Activated naive CD4-positive, alpha-beta T cell treated with anti-CD3 and anti-CD28 coated beads for 36 hours (primary cell): ENCODE measurements at regions of chr1 and their contacts with region 1.

Region 1: GRCh38 chr1:246497331-246497915 is 9.7 kb downstream of the SMYD3 start:
- DNase-seq: no peak
- H3K4me3 Mint-ChIP-seq: no peak overlapping the region
- H3K27ac Mint-ChIP-seq: no peak overlapping the region
- H3K4me1 Mint-ChIP-seq: peaks cover 13% of the 10 kb centered on the region
- H3K27me3 Mint-ChIP-seq: no peaks in the 10 kb centered on the region

Region 2: DNA sequence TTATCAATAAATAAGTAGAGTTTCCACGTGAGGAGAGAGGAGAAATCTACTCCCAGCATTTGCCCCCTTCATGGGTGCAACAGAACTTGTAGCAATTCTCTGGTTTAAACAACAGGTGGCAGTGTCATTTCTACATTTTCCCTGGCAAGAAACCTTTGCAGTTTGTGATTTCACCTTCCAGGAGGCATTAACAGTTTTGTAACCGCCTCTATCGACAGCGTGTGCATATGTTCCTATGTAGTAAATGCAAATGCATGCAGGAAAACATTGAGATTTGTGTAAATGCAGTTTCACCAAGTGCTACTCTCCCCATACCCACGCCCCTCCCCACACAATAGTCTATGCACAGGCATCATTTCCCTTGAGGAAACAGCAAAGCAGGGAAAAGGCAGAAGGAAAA is 485.1 kb before region 1 on chr1:
- CTCF ChIA-PET with region 1: interaction called, 5 read pairs
- intact Hi-C with region 1: loop called (anchors 1 kb)
- DNase-seq: peak; percentile 11
- H3K4me3 Mint-ChIP-seq: no peak overlapping the region
- H3K27ac Mint-ChIP-seq: no peak overlapping the region
- H3K4me1 Mint-ChIP-seq: no peaks in the 10 kb centered on the region
- H3K27me3 Mint-ChIP-seq: no peaks in the 10 kb centered on the region

Region 3: DNA sequence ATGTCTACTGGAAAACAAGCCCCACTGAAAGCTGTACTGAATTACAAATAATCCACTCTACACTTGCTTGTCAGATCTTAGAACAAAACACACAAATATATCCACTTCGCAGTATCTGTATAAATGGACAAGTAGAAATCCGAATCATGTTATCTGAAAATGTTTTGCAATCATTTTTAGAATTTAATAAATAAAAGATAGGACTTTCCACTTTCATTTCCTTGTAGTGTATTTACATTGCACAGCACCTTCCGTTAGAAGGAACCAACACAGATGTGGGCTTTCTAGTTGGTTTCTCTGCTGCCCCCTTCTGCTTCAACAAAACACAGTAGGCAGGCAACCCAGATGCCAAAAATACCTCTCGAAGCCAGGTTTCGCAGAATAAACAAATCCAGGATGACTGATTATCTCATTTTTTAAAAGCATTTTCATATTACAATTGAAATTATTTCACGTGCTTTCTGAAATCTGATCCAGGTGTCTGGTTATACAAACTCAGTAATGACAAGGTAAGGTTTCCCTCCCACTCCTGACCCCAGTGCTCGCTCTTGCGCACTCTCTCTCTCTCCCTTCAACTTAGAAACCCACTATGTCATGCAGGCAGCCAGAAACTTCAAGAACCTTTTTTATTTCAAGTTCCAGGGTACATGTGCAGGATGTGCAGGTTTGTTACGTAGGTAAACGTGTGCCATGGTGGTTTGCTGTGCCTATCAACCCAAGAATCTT is 380.2 kb before region 1 on chr1:
- CTCF ChIA-PET with region 1: no interaction called
- intact Hi-C with region 1: loop called (anchors 5 kb)
- DNase-seq: peak; percentile 45
- H3K4me3 Mint-ChIP-seq: peak overlapping the region; percentile 3
- H3K27ac Mint-ChIP-seq: peak overlapping the region; percentile 42
- H3K4me1 Mint-ChIP-seq: peaks cover 19% of the 10 kb centered on the region
- H3K27me3 Mint-ChIP-seq: no peaks in the 10 kb centered on the region

Region 4: GRCh38 chr1:246532519-246532918 is 35.1 kb after region 1 on chr1:
- CTCF ChIA-PET with region 1: interaction called, 6 read pairs
- intact Hi-C with region 1: loop called (anchors 1 kb)
- DNase-seq: no peak
- H3K4me3 Mint-ChIP-seq: no peak overlapping the region
- H3K27ac Mint-ChIP-seq: no peak overlapping the region
- H3K4me1 Mint-ChIP-seq: no peaks in the 10 kb centered on the region
- H3K27me3 Mint-ChIP-seq: no peaks in the 10 kb centered on the region

Region 5: GRCh38 chr1:246753670-246754535 is 256.5 kb after region 1 on chr1:
- CTCF ChIA-PET with region 1: no interaction called
- intact Hi-C with region 1: loop called (anchors 1 kb)
- DNase-seq: peak; percentile 72
- H3K4me3 Mint-ChIP-seq: no peak overlapping the region
- H3K27ac Mint-ChIP-seq: no peak overlapping the region
- H3K4me1 Mint-ChIP-seq: no peaks in the 10 kb centered on the region
- H3K27me3 Mint-ChIP-seq: no peaks in the 10 kb centered on the region

Region 6: DNA sequence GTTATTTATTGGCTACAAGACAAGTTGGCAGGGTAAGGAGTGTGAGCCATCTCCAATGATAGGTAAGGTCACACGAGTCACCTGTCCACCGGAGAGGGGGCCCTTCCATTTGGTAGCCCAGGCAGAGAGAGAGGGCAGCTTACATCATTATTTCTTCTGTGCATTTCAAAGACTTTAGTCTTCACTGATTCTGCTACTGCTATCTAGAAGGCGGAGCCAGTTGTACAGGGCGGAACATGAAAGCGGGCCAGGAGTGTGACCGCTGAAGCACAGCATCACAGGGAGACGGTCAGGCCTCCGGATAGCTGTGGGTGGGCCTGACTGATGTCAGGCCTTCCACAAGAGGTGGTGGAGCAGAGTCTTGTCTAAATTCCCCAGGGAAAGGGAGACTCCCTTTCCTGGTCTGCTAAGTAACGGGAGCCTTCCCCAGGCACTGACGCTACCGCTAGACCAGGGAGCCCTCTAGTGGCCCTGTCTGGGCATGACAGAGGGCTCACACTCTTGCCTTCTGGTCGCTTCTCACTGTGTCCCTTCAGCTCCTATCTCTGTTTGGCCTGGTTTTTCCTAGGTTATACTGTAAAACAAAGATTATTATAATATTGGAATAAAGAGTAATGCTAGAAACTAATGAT is 473.8 kb after region 1 on chr1:
- CTCF ChIA-PET with region 1: no interaction called
- intact Hi-C with region 1: loop called (anchors 2 kb)
- DNase-seq: peak; percentile 55
- H3K4me3 Mint-ChIP-seq: no peak overlapping the region
- H3K27ac Mint-ChIP-seq: no peak overlapping the region
- H3K4me1 Mint-ChIP-seq: no peaks in the 10 kb centered on the region
- H3K27me3 Mint-ChIP-seq: peaks cover 3% of the 10 kb centered on the region